Mammary epithelial cell (primary cell): ENCODE measurements at regions of chr4 and their contacts with region 1.

Region 1: DNA sequence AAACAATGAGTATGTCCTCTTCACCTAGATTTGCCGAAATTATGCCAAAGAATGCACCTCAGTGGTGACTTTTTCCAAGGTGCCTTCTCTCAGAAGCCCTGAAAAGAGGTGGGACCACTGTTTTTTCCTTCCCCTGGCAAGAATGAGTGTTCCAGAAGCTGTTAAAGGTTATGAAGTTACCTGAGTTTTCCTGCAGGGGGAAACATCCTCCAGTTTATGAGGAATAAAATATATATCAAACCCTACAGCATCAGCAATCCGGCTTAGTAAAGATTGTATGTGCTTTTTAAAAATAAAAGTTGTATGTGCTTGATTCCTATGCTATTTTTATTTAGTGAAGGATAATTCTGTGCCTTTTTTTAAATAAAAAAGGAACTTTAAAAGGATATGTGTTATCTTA is 73.3 kb downstream of the RBM46 start:
- DNase-seq: peak; percentile 20
- H3K4me3 ChIP-seq: no peak overlapping the region
- H3K27ac ChIP-seq: no peak overlapping the region
- H3K4me1 ChIP-seq: no peaks in the 10 kb centered on the region
- H3K27me3 ChIP-seq: no peaks in the 10 kb centered on the region
- CTCF ChIP-seq: peak; percentile 32 to 54

Region 2: GRCh38 chr4:154807042-154807630 is 47.2 kb before region 1 on chr4:
- CTCF ChIA-PET with region 1: interaction called, 6 read pairs
- dilution Hi-C with region 1: no loop called
- in situ Hi-C with region 1: no loop called
- intact Hi-C with region 1: loop called (anchors 2 kb)
- DNase-seq: peak; percentile 38
- H3K4me3 ChIP-seq: peak overlapping the region in 1 of 3 experiments; percentile 41
- H3K27ac ChIP-seq: no peak overlapping the region
- H3K4me1 ChIP-seq: no peaks in the 10 kb centered on the region
- H3K27me3 ChIP-seq: no peaks in the 10 kb centered on the region
- CTCF ChIP-seq: peak; percentile 76 to 77

Region 3: DNA sequence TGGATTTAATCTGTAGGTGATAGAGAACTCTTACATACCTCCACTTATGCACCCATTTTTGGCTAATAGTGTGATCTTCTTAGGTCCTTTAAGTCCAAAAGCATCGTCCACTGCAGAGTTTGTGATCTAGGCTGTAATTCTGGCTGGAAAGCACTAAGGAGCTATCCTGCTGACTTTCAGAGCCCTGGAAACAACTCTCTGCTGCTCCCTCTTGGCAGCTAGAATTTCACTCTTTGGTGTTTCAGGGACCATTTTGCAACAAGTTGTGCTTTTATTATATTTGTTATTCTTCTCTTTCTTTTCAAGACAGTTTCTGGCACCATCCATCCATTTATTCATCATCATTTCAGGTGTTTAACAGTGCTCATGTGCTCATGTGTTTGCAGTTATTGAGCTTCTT is 56.7 kb after region 1 on chr4:
- CTCF ChIA-PET with region 1: no interaction called
- dilution Hi-C with region 1: no loop called
- in situ Hi-C with region 1: no loop called
- intact Hi-C with region 1: loop called (anchors 1 kb)
- DNase-seq: no peak
- H3K4me3 ChIP-seq: no peak overlapping the region
- H3K27ac ChIP-seq: no peak overlapping the region
- H3K4me1 ChIP-seq: peaks cover 5% of the 10 kb centered on the region
- H3K27me3 ChIP-seq: peaks cover 2% of the 10 kb centered on the region
- CTCF ChIP-seq: peak; percentile 15 to 65

Region 4: GRCh38 chr4:154928640-154929257 is 74.4 kb after region 1 on chr4:
- CTCF ChIA-PET with region 1: no interaction called
- dilution Hi-C with region 1: no loop called
- in situ Hi-C with region 1: loop called in 1 of 2 experiments (anchors 10 kb)
- intact Hi-C with region 1: loop called (anchors 1 kb)
- DNase-seq: peak; percentile 23
- H3K4me3 ChIP-seq: no peak overlapping the region
- H3K27ac ChIP-seq: no peak overlapping the region
- H3K4me1 ChIP-seq: no peaks in the 10 kb centered on the region
- H3K27me3 ChIP-seq: no peaks in the 10 kb centered on the region
- CTCF ChIP-seq: peak; percentile 41 to 76

Region 5: GRCh38 chr4:155371432-155372043 is 517.2 kb after region 1 on chr4:
- CTCF ChIA-PET with region 1: no interaction called
- dilution Hi-C with region 1: no loop called
- in situ Hi-C with region 1: no loop called
- intact Hi-C with region 1: loop called (anchors 1 kb)
- DNase-seq: peak; percentile 5
- H3K4me3 ChIP-seq: no peak overlapping the region
- H3K27ac ChIP-seq: no peak overlapping the region
- H3K4me1 ChIP-seq: peaks cover 5% of the 10 kb centered on the region
- H3K27me3 ChIP-seq: no peaks in the 10 kb centered on the region
- CTCF ChIP-seq: peak; percentile 47 to 48

Region 6: GRCh38 chr4:155787113-155787710 is 932.9 kb after region 1 on chr4:
- CTCF ChIA-PET with region 1: no interaction called
- dilution Hi-C with region 1: no loop called
- in situ Hi-C with region 1: no loop called
- intact Hi-C with region 1: loop called (anchors 10 kb)
- DNase-seq: peak; percentile 51
- H3K4me3 ChIP-seq: no peak overlapping the region
- H3K27ac ChIP-seq: no peak overlapping the region
- H3K4me1 ChIP-seq: no peaks in the 10 kb centered on the region
- H3K27me3 ChIP-seq: no peaks in the 10 kb centered on the region
- CTCF ChIP-seq: peak; percentile 86 to 90